ENCODE measurements at regions of chr11 and their contacts with region 1.

Region 1: DNA sequence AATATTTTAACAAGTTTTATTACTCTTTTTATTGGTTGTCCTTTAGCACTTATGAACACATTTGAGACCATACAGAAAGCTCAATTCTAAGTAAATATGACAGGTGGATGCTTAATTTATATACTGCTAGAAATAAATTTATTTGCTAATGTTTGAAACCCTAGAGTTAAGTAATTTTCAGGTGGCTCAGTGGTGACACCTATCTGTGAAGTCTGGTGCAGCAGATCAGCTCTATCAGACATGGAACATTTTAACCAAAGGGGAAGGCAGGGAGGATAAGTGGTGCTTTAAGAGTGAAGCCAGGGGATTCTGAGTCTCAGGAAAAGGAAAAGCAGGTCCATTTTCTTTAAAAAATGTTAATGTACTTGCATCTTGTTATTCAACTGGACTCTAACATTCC is 175.8 kb downstream of the DSCAML1 start:
- DNase-seq: peak; percentile 45
- CTCF ChIP-seq: peak; percentile 60

Region 2: DNA sequence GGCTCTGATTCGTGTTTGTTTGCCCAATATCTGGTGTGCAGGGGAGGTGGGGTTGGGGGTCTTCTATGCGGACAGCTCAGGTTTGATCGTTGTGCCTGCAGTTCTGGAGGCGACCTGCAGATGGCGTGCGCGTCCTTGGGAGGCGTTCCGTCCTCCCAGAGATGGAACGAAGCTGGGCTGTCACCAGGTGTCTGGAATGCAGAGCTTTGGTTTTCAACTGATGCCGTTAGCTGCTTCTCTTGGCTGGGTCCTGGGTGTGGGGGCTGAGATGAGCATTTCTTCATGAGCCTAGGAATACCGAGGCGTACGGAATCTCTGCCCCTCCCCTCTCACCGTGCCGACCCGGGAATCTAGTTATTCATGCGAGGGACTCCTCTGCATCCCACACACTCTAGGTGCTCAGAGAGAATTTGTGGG is 194.9 kb before region 1 on chr11:
- in situ Hi-C with region 1: loop called (anchors 10 kb)
- DNase-seq: peak; percentile 89
- CTCF ChIP-seq: peak; percentile 96

Region 3: GRCh38 chr11:117932067-117932370 is 310.8 kb after region 1 on chr11:
- in situ Hi-C with region 1: no loop called
- DNase-seq: peak; percentile 75
- CTCF ChIP-seq: no peak

Measured in GM13977 (cell line).